ENCODE measurements at regions of chr7 and their contacts with region 1.

Region 1: DNA sequence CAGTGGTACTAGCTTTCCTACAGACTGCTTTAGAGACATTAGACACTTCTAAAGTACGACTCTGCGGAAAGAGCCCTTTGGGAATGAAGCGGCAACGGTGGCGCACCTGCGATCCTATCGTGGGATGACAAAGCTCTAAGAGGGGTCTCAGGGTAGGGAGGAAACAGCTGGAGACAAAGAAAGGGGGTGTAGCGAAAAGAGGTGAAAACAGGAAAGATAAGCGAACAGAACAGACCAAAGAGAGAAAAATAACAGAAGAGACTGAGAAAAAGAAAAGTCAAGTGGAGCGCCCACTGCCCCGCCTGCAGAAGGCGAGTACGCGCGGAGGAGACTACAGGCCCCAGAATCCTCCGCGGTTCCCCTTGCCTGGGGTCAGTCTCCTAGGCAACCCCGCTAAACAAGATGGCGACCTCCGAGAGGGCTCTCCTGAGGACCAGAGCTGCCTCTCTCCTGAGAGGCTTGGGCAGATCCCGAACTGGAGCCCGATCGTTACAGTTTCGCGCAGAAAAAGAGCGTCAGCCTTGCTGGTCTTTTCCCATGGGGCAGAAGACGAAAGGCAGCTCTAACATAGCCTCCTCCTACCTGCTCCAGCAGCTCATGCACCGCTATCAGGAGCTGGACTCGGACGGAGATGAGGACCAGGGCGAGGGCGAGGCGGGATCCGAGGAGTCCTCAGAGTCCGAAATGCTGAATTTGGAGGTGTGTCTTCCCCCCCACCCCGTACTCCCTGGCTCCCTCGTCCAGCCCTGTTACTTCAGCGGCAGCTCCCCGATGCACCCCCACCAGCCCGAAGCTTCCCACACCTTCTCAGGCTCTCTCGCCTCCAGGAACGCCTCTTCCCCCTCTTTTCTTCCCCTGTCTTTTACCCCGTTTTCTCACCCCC is at the start of gene LRGUK:
- DNase-seq: peak; percentile 88
- H3K4me3 ChIP-seq: peak within 1 kb of the TSS; percentile 62
- H3K27ac ChIP-seq: no peak within 1 kb of the TSS
- H3K4me1 ChIP-seq: peaks cover 3% of the 10 kb centered on the region
- H3K27me3 ChIP-seq: no peaks in the 10 kb centered on the region
- CTCF ChIP-seq: no peak
- total RNA-seq, gene LRGUK: 0.54 and 0.74 TPM in 2 replicates

Region 2: DNA sequence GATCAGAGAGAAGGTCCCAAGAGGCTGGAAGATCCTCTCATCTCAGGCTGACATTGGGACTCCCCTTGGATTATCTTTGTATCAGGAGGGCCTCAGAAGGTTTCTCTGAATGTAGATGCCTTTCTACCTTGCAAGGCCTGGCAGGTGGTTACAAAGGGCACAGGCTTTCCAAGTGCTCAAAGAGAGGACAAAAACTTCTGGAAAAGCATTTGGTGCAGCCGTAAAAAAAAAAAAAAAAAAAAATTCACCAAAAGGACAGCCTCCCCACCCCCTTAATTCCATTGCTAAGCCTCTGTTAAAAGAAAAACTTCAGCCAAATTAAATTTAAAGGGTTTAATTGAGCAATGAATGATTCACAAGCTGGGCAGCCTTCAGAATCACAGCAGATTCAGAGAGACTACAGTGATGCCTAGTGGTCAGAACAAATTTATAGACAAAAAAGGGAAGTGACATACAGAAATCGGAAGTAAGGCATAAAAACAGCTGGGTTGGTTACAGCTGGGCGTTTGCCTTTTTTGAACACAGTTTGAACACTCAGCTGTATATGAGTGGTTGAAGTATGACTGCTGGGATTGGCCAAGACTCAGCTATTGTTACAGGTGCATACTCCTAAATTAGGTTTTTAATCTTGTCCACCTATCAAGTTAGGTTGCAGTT is 42.6 kb before region 1 on chr7:
- CTCF ChIA-PET with region 1: interaction called, 10 read pairs
- POLR2A ChIA-PET with region 1: no interaction called
- intact Hi-C with region 1: no loop called
- DNase-seq: peak; percentile 36
- H3K4me3 ChIP-seq: no peak overlapping the region
- H3K27ac ChIP-seq: no peak overlapping the region
- H3K4me1 ChIP-seq: no peaks in the 10 kb centered on the region
- H3K27me3 ChIP-seq: no peaks in the 10 kb centered on the region
- CTCF ChIP-seq: no peak

Region 3: DNA sequence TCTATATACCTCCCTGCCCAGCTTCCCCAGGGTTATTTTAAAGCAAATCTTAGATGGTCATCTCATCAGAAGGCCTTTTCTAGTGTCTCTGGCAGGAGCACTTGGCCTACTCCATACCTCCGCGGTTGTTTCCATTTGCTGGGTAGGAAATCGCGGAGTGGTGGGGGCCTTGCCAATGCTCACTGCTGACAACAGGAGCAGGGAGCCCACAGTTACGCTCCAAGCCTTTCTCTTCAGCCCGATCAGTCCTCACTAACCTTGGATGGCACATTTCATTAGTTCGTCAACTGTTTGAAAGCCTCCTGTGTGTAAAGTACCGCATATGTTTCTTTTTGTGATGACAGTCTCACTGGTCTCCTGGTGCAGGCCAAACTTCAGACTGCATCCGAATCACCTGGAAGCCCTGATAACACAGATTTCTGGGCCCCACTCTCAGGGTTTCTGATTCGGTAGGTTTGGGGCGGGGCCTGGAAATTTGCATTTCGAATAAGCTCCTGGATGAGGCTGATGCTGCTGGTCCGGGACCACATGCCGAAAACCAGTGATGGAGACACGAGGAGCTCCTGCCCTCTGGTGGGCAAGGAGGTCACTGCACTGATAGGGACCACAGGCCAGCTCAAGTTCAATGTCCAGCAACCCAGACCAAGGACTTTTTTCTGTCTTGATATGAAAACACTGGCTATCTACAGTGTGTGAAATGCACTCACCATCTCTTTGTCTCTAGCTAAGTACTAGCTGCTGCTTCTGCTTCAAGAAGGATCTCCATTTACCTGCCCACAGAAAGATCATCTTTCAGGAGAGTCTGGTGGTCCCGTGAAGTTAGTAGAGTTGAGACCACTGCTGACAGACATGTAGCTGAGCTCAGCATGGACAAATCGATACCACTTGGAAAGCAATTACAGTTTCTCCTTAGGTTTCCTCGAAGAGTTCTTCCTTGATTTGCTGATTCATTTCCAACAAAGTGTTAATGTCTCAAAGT is 14.0 kb after region 1 on chr7:
- CTCF ChIA-PET with region 1: interaction called, 14 read pairs
- POLR2A ChIA-PET with region 1: no interaction called
- intact Hi-C with region 1: no loop called
- DNase-seq: peak; percentile 47
- H3K4me3 ChIP-seq: no peak overlapping the region
- H3K27ac ChIP-seq: no peak overlapping the region
- H3K4me1 ChIP-seq: no peaks in the 10 kb centered on the region
- H3K27me3 ChIP-seq: no peaks in the 10 kb centered on the region
- CTCF ChIP-seq: peak; percentile 83

Measured in A673 (cell line).